ENCODE measurements at regions of chr7 and their contacts with region 1.

Region 1: DNA sequence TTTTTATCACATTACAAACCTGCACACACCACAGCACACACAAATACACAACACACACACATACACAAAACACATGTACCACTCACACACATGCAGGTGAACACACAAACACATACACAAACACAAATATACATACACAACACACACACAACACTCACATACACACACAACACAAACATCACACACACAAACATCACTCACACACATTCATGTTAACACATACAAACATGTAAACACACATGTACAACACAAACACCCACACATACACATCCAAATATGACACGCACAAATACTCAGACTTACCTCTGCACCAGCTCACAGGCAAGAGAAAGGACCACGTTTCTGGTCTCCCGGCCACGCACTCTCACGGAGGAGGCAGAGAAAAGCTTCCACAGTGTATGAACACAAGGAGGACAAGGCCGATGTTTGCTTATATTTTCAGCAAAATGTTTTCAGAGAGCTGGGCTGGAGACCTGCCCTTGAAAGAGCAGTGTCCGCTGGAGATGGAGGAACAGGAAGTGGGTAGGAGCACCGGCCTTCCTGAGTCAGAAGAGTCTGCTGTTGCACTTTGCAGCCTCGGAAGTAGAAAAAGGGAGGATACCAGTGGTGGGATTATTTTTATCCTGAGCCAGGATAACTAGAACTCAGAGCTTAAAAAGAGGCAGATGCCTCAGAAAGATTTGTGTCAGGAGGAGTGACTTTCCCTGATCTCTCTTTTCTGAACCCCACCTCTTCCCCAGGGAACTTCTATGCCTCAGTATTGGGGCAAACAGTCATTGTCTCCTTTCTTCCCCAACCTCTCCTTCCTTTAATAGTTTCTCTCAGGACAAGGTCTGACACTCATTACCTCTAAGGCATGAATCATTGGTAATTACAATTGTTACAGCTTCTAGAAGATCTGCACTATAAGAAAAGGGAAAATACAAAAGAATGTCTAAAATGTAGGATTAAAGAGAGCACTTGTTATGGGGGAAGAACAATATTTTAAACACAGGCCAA is at the start of gene GIMAP6:
- DNase-seq: peak; percentile 61
- ATAC-seq: peak; percentile 71
- H3K4me3 Mint-ChIP-seq: peak within 1 kb of the TSS; percentile 99
- H3K27ac Mint-ChIP-seq: peak within 1 kb of the TSS; percentile 99
- H3K4me1 Mint-ChIP-seq: peaks cover 69% of the 10 kb centered on the region
- H3K27me3 Mint-ChIP-seq: no peaks in the 10 kb centered on the region
- CTCF ChIP-seq: no peak
- total RNA-seq, gene GIMAP6: 21.2 to 21.5 TPM

Region 2: DNA sequence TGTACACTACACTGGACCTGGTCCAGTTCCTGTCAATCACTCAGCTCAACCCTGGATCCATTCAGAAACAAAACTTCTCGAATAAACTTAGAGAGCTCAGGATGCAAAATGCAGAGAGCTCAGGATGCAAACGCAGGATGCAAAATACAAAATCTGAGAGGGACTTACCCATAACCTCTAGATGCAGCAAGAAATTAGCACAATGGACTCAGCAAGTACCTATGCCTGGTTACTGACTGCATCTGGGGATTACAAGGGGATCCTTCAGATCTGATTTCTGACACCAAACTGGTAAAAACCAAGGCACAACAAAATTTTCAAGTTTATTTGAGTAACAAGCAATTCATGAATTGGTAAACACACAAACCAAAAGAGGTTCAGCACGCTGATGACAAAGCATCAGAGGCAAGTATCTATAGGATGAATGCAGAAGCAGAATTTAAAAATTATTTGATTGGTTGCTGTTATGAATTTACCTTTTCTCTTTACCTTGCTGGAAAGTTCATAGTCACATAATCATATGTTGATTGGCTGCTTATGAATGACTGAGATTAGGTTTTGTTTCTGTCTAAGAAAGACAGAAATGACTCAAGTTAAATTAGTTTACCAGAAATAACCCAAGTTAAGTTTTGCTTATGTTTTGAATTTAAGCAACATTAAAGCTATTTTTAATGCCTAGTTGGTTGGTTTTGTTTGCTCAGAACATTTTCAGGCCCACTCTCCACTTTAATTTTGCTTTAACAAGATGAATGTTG is 11.4 kb before region 1 on chr7:
- CTCF ChIA-PET with region 1: interaction called, 5 read pairs
- POLR2A ChIA-PET with region 1: interaction called, 16 read pairs
- intact Hi-C with region 1: no loop called
- DNase-seq: no peak
- ATAC-seq: peak; percentile 46
- H3K4me3 Mint-ChIP-seq: no peak overlapping the region
- H3K27ac Mint-ChIP-seq: peak overlapping the region; percentile 80
- H3K4me1 Mint-ChIP-seq: peaks cover 54% of the 10 kb centered on the region
- H3K27me3 Mint-ChIP-seq: no peaks in the 10 kb centered on the region
- CTCF ChIP-seq: no peak

Region 3: DNA sequence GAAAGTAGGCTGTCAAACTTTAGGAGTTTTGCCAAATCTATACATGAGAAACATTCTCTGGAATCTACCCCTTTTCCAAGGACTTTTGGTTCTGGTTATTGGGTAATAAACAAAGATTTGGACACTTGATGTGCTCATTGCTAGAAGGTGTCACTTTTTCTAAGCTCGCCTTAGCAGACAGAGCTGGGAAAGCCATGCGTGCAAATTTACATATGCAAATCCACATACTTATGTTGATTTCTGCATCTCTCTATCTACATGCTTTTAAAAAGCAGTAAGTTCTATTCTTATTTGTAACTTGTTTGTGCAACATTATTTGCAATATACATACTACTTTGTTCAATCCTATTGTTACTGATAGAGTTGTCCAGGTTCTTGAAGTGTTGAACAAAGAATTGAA is 22.5 kb after region 1 on chr7:
- CTCF ChIA-PET with region 1: no interaction called
- POLR2A ChIA-PET with region 1: no interaction called
- intact Hi-C with region 1: no loop called
- DNase-seq: no peak
- ATAC-seq: no peak
- H3K4me3 Mint-ChIP-seq: no peak overlapping the region
- H3K27ac Mint-ChIP-seq: no peak overlapping the region
- H3K4me1 Mint-ChIP-seq: peaks cover 5% of the 10 kb centered on the region
- H3K27me3 Mint-ChIP-seq: no peaks in the 10 kb centered on the region
- CTCF ChIP-seq: no peak

Region 4: GRCh38 chr7:150668472-150668911 is 36.3 kb after region 1 on chr7:
- CTCF ChIA-PET with region 1: interaction called, 4 read pairs
- POLR2A ChIA-PET with region 1: interaction called, 10 read pairs
- intact Hi-C with region 1: loop called (anchors 5 kb)
- DNase-seq: peak; percentile 85
- ATAC-seq: peak; percentile 73
- H3K4me3 Mint-ChIP-seq: peak overlapping the region; percentile 54
- H3K27ac Mint-ChIP-seq: peak overlapping the region; percentile 97
- H3K4me1 Mint-ChIP-seq: peaks cover 86% of the 10 kb centered on the region
- H3K27me3 Mint-ChIP-seq: no peaks in the 10 kb centered on the region
- CTCF ChIP-seq: no peak

Measured in activated CD8-positive, alpha-beta T cell treated with anti-CD3 and anti-CD28 coated beads for 36 hours (primary cell).